Dorsolateral prefrontal cortex (tissue), 120 donors: ENCODE measurements at regions of chr18 and their contacts with region 1.

Region 1: GRCh38 chr18:79378542-79379250 is 17.0 kb upstream of the NFATC1 start:
- DNase-seq: peak; percentile 62 to 91 (median 81)
- H3K4me3 ChIP-seq: peak overlapping the region in 14 of 59 donors; percentile 9 to 45 (median 29)
- H3K27ac ChIP-seq: peak overlapping the region in 23 of 59 donors; percentile 4 to 73 (median 40)
- H3K27me3 ChIP-seq: no peaks in the 10 kb centered on the region
- CTCF ChIP-seq: peak; percentile 53 to 97 (median 92)

Region 2: DNA sequence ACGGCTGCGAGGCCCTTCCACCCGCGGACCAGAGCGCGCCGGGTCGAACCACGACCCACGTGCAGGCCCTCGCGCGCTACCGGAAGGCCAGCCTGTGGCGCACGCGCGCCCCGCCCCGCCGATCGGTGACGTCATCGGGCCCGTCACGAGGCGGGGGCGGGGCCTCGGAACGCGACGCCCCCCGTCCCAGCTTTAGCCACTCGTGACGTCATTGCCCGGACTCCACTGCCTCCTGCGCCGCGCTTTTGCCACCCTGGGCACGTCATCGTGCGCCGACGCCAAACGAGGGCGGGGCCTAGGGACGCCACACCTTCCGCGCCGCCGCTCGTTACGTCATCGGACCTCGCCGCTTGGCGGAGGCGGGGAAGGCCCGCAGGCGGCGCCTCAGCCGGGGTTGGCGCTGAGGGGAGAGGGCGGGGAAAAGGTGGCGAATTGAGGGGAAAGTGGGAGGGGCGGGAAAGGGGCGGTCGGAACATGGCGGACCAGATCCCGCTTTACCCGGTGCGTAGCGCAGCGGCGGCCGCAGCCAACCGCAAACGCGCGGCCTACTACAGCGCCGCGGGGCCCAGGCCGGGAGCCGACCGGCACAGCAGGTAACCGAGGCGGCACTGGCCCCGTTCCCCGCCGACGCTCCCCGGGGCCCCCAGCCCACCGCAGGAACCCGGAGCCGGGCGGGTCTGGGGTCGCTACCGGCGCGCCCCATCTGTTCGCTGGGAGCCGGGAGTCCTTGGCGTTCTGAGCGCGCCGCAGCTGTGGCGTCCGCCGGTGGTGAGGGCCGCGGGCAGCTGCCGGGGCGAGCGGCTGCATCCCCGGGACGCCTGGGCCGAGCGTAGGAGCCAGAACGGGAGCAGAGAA is 309.5 kb before region 1 on chr18 and contains the start of gene ATP9B:
- intact Hi-C with region 1: loop called in 1 of 2 experiments (anchors 5 kb)
- DNase-seq: peak; percentile 94 to 99 (median 98)
- H3K4me3 ChIP-seq: peak within 1 kb of the TSS; percentile 48 to 100 (median 97)
- H3K27ac ChIP-seq: peak within 1 kb of the TSS; percentile 40 to 98 (median 94)
- H3K27me3 ChIP-seq: no peaks in the 10 kb centered on the region
- CTCF ChIP-seq: peak in 49 of 56 donors; percentile 4 to 62 (median 37)
- total RNA-seq, gene ATP9B: 67.5 to 145 (median 97.7) TPM

Region 3: DNA sequence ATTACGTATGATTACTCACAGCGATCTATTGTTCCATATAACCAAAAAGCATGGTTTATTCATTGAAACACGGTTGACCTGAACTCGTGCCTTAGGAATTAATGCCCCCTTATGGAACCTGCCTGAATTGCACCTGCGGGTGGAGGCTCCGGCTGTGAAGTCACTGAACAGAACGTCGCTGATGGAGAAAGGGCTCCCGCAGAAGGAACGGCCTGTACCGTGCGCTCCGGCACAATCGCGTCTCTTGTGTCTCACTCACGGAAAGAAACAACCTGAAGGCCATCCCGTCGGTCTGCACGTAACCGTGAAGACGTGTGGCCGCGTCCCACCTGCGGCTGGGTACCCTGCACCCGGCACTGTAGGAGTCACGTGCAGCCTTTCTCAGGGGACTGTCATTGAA is 150.2 kb after region 1 on chr18:
- intact Hi-C with region 1: loop called (anchors 1 to 5 kb)
- DNase-seq: peak in 8 of 10 donors; percentile 45 to 81 (median 53)
- H3K4me3 ChIP-seq: no peak overlapping the region
- H3K27ac ChIP-seq: no peak overlapping the region
- H3K27me3 ChIP-seq: peaks cover 0 to 59% (median 11%) of the 10 kb centered on the region in 45 donors
- CTCF ChIP-seq: peak; percentile 60 to 94 (median 82)

Region 4: GRCh38 chr18:79546781-79547272 is 168.1 kb after region 1 on chr18:
- intact Hi-C with region 1: no loop called
- DNase-seq: peak in 4 of 10 donors; percentile 28 to 68 (median 37)
- H3K4me3 ChIP-seq: peak overlapping the region in 23 of 59 donors; percentile 4 to 49 (median 16)
- H3K27ac ChIP-seq: peak overlapping the region in 9 of 59 donors; percentile 7 to 80 (median 52)
- H3K27me3 ChIP-seq: peaks cover 0 to 27% (median 0%) of the 10 kb centered on the region in 45 donors
- CTCF ChIP-seq: no peak

Region 5: DNA sequence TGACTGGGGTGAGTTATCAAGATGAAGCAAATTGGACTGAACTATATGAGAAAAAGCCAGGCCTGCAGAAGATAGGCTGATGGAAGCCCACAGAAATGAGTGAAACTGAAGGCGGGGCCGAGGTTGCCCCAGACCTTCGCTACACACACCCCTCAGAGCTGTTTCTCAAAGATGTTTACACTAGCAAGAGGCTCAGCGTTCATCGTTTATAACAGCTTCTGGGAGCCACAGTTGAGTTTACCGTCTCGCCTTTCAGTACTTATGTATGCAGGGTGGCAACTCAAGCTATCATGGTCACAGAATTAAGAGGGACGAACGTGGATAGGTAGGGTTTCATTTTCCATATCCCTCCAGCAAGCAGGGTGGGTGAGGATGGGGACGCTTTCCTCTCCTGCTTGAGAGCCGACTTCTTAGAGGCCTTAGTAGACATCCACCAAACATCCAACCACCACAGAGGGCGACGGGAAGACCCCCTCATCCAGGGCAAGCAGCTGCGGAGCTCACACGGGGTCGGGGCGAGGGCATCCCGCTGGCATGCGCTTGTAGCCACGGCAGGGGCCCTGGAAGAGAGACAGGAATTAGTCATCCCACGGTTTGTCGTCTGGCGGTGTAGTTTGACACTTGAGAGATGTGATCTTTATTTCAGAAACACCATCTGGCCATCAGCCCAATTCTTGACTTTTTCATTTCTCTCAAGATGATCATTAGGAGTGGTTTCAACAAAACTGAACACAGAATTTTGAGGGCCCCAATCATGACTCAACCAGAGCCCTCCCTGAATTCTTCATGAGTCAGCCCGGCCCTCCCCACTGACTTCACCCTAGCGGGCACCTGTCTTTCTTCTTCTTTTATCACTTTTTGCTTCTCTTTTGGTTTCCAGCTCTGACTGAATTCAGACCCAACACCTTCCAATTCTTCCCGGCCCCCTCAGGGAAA is 191.8 kb after region 1 on chr18:
- intact Hi-C with region 1: loop called in 1 of 2 experiments (anchors 5 kb)
- DNase-seq: peak in 6 of 10 donors; percentile 11 to 26 (median 22)
- H3K4me3 ChIP-seq: no peak overlapping the region
- H3K27ac ChIP-seq: no peak overlapping the region
- H3K27me3 ChIP-seq: peaks cover 0 to 11% (median 0%) of the 10 kb centered on the region in 45 donors
- CTCF ChIP-seq: no peak

Region 6: GRCh38 chr18:79644006-79644665 is 265.4 kb after region 1 on chr18:
- intact Hi-C with region 1: loop called (anchors 1 to 2 kb)
- DNase-seq: peak in 7 of 10 donors; percentile 29 to 79 (median 56)
- H3K4me3 ChIP-seq: peak overlapping the region in 22 of 59 donors; percentile 8 to 49 (median 22)
- H3K27ac ChIP-seq: no peak overlapping the region
- H3K27me3 ChIP-seq: peaks cover 0 to 18% (median under 1%) of the 10 kb centered on the region in 45 donors
- CTCF ChIP-seq: peak; percentile 76 to 100 (median 97)

Region 7: DNA sequence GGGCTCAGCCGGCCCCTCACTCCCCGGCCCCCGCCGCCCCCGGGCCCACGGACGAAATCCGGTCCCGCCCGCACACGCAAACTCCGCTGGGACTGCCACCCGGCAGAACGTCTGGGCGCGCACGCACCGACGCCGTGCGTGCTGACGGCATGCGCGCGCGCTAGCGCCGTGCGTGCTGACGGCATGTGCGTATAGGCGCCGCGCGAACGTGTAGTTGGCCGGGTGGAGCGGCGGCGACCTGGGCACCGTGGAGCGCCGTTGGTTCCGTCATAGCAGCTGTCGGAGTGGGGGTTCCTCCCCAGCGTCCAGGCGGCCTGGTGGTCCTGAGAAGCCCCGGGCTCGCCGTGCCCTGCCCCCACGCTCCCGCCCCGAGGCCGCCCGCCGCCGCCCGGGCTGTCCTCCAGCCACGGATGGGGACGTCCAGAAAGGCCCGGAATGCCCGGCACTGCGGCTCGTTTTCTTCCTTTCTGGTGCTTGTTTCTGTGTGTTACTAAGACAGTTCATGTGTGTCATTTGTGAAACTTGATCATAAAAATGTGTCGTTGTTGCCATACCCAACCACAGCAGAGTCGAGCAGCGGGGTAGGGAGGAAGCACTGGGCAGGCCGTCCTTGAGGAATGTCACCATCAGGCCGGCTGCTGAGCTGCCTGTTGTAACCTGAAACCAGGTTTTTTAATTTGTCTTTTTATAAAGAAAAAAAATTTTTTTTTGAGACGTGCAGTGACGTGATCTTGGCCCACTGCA is 609.9 kb after region 1 on chr18 and contains the start of gene TXNL4A:
- intact Hi-C with region 1: loop called in 1 of 2 experiments (anchors 10 kb)
- DNase-seq: peak; percentile 76 to 94 (median 87)
- H3K4me3 ChIP-seq: peak within 1 kb of the TSS; percentile 74 to 100 (median 92)
- H3K27ac ChIP-seq: peak within 1 kb of the TSS; percentile 75 to 99 (median 92)
- H3K27me3 ChIP-seq: no peaks in the 10 kb centered on the region
- CTCF ChIP-seq: peak in 9 of 56 donors; percentile 0 to 37 (median 7)
- total RNA-seq, gene TXNL4A: 68.3 to 133 (median 95.2) TPM